ENCODE measurements at regions of chrX and their contacts with region 1.

Region 1: GRCh38 chrX:40146262-40147125 is 48.7 kb upstream of the BCOR start:
- DNase-seq: peak in 1 of 2 donors; percentile 62
- ATAC-seq: peak; percentile 49 to 76 (median 69)
- H3K4me3 ChIP-seq: peak overlapping the region; percentile 69
- H3K27ac ChIP-seq: peak overlapping the region; percentile 41
- H3K4me1 ChIP-seq: peaks cover 7% of the 10 kb centered on the region
- H3K27me3 ChIP-seq: peaks cover 0 to 76% (median 0%) of the 10 kb centered on the region in 3 donors
- CTCF ChIP-seq: no peak

Region 2: DNA sequence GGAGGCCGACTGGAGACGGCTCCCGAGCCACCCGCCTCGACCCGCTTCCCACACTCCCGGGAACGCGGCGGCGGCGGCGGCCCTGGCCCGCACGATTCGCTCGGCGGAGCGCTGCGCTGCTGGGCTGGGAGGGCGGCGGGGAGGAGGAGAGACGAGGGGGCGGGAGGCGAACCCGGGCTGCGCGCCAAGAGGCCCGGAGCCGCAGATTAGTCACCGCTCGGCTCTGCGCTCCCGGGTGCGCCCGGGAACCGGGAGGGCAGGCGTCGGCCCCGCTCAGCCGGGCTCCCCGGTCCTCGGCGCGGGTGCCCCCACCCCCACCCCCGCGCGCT is 37.6 kb before region 1 on chrX:
- intact Hi-C with region 1: loop called in 1 of 2 experiments (anchors 5 kb)
- DNase-seq: peak; percentile 84 to 91
- ATAC-seq: peak; percentile 70 to 78 (median 72)
- H3K4me3 ChIP-seq: peak overlapping the region; percentile 67
- H3K27ac ChIP-seq: peak overlapping the region; percentile 93
- H3K4me1 ChIP-seq: peaks cover 23% of the 10 kb centered on the region
- H3K27me3 ChIP-seq: peaks cover 0 to 68% (median 0%) of the 10 kb centered on the region in 3 donors
- CTCF ChIP-seq: no peak